K562 (cell line): ENCODE measurements at regions of chr3 and their contacts with region 1.

Region 1: GRCh38 chr3:25594007-25594502 is 70.7 kb downstream of the TOP2B start:
- DNase-seq: peak; percentile 35 to 68 (median 63)
- ATAC-seq: peak; percentile 69
- H3K4me3 ChIP-seq: no peak overlapping the region
- H3K27ac ChIP-seq: no peak overlapping the region
- H3K4me1 ChIP-seq: peaks cover 0 to 18% of the 10 kb centered on the region in 2 experiments; a peak in 2 of 5 replicates
- H3K27me3 ChIP-seq: no peaks in the 10 kb centered on the region
- CTCF ChIP-seq: peak; percentile 59 to 79 (median 67); a peak in 5 of 6 replicates
- EP300 ChIP-seq: no peak
- POLR2A ChIP-seq: no peak
- RAD21 ChIP-seq: peak; percentile 61 to 66

Region 2: DNA sequence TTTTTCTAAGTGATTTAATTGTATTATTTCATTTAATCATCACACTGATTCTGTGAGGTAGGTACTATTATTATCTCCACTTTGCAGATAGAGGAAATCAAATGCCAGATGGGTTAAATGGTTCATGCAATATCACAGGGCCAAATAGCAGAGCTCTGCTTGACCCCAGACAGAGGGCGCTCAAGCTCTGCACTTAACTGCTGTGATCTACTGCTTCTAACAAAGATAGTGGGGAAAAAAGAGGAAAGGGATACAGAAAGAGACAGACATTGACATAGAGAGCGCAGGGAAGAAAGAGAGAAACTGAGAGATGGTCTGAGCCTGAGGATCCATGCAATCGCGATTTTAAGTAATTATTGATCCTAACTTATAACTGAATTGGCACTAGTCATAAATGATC is 820.3 kb before region 1 on chr3:
- CTCF ChIA-PET with region 1: interaction called, 4 read pairs
- POLR2A ChIA-PET with region 1: no interaction called
- in situ Hi-C with region 1: no loop called
- intact Hi-C with region 1: loop called (anchors 1 kb)
- DNase-seq: peak in 3 of 4 experiments; percentile 13 to 56 (median 17)
- ATAC-seq: peak; percentile 88
- H3K4me3 ChIP-seq: no peak overlapping the region
- H3K27ac ChIP-seq: no peak overlapping the region
- H3K4me1 ChIP-seq: no peaks in the 10 kb centered on the region
- H3K27me3 ChIP-seq: no peaks in the 10 kb centered on the region
- CTCF ChIP-seq: peak; percentile 40 to 65 (median 62)
- EP300 ChIP-seq: no peak
- POLR2A ChIP-seq: no peak
- RAD21 ChIP-seq: peak; percentile 55 to 72

Region 3: DNA sequence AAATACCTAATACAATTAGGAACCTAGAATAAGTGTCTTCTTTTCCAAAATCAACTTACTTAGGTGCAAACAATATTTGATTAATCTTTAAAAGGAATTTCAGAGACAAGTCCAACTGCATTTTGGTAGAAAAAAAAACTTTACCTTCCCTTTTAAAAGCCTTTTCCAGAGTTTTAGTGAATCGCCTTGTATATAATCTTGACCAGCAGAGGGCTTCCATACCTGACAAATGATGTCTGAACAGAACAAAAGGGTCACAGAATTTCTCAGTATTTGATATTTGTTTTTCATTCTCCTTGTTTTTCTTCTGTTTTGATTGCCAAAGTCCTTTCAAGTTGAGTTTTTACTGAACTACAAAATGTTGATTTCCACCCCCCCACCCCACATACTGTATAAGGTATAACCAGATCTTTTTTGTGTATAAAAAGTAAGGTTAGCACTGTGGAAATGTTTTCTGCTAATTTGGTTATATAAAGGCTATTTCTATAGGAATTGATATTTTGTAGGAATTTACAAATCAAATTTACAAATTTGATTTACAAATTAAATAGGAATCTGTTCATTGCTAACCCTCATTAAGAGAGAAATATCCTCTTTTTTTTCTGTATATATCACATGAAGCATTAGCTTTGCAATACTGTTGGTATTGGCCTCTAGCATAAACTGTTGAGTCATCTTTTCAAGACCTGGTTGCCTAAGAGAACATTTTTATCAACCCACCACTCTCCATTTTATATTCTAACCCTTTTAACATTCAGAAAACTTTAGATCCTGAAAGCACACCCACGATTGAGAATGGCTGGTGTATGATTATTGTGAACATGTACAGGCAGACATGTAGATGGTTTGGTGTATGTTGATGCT is 630.1 kb before region 1 on chr3:
- CTCF ChIA-PET with region 1: interaction called, 3 read pairs
- POLR2A ChIA-PET with region 1: no interaction called
- in situ Hi-C with region 1: no loop called
- intact Hi-C with region 1: loop called (anchors 5 kb)
- DNase-seq: peak in 1 of 4 experiments; percentile 6
- ATAC-seq: no peak
- H3K4me3 ChIP-seq: no peak overlapping the region
- H3K27ac ChIP-seq: no peak overlapping the region
- H3K4me1 ChIP-seq: no peaks in the 10 kb centered on the region
- H3K27me3 ChIP-seq: no peaks in the 10 kb centered on the region
- CTCF ChIP-seq: no peak; a peak in 1 of 6 replicates
- EP300 ChIP-seq: no peak
- POLR2A ChIP-seq: no peak
- RAD21 ChIP-seq: peak in 1 of 2 experiments; percentile 40; a peak in 1 of 4 replicates

Region 4: DNA sequence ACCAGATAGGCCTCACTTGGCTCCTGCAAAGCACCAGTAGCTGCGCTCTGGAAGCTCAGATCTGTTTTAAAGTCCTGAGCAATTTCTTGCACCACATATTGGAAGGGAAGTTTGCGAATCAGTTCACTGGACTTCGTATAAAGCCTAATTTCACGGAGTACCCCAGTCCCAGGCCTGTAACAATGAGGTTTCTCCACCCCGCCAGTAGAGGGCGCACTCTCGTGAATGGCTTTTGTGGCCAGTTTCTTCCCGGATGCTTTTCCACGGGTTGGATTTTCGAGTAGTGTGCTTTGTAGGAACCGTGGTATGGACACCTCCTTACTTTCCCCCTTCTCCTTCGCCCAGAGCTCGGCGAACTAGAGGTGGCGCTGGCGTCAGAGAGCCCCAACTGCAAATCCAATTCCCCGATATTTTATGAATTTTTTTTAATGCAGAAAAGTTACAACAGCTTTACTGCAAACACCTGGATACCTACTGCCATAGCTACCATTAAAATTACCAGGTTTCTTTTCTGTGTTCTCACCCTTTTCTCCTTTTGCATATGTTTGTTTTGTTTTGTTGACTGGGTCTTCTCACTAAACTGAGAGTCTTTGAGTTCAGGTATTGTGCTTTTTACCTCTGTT is 152.7 kb before region 1 on chr3:
- CTCF ChIA-PET with region 1: no interaction called
- POLR2A ChIA-PET with region 1: no interaction called
- in situ Hi-C with region 1: no loop called
- intact Hi-C with region 1: loop called (anchors 2 kb)
- DNase-seq: peak; percentile 57 to 78 (median 72)
- ATAC-seq: peak; percentile 90
- H3K4me3 ChIP-seq: no peak overlapping the region
- H3K27ac ChIP-seq: no peak overlapping the region
- H3K4me1 ChIP-seq: no peaks in the 10 kb centered on the region
- H3K27me3 ChIP-seq: peaks cover 2 to 7% of the 10 kb centered on the region in 2 experiments; a peak in 1 of 5 replicates
- CTCF ChIP-seq: peak; percentile 76 to 94 (median 79)
- EP300 ChIP-seq: no peak
- POLR2A ChIP-seq: no peak
- RAD21 ChIP-seq: peak in 1 of 2 experiments; percentile 53; a peak in 3 of 4 replicates

Region 5: DNA sequence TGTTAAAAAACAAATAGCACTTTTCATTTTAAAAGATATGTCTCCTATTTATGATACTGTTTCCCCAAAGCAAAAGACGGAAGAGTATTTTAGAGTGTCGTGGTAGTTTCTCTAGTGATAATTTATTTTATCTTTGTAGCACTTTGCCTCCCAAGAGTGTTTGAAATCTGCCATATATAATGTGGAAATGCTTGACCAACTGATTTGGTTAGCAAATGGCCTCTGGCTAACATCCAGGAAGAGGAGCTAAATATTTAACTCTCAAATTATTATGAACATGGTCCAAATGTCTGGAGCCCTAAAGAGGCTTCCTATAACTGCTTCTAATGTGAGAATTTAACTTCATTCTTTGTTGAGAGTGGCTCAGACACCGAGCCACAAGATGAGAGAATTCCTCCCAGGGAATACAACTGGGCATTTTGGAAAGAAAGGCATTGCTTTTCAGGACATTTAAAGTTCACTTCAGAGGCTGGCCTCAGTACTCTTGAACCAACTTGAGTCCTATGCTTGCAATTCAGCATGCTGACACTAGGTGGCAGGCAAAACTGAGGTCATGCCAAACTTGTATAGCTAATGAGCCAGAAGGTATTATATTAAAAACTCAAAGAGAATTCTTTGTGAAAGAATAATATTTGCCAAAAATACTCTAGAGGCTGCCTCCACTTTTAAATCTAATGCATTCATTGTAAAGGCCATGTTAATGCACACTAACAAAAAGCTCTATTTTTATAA is 61.5 kb before region 1 on chr3:
- CTCF ChIA-PET with region 1: interaction called, 5 read pairs
- POLR2A ChIA-PET with region 1: no interaction called
- in situ Hi-C with region 1: no loop called
- intact Hi-C with region 1: loop called (anchors 1 kb)
- DNase-seq: peak; percentile 59 to 73 (median 67)
- ATAC-seq: peak; percentile 76
- H3K4me3 ChIP-seq: no peak overlapping the region
- H3K27ac ChIP-seq: no peak overlapping the region
- H3K4me1 ChIP-seq: no peaks in the 10 kb centered on the region
- H3K27me3 ChIP-seq: no peaks in the 10 kb centered on the region
- CTCF ChIP-seq: peak; percentile 57 to 79 (median 79)
- EP300 ChIP-seq: no peak
- POLR2A ChIP-seq: no peak
- RAD21 ChIP-seq: peak; percentile 40 to 76

Region 6: DNA sequence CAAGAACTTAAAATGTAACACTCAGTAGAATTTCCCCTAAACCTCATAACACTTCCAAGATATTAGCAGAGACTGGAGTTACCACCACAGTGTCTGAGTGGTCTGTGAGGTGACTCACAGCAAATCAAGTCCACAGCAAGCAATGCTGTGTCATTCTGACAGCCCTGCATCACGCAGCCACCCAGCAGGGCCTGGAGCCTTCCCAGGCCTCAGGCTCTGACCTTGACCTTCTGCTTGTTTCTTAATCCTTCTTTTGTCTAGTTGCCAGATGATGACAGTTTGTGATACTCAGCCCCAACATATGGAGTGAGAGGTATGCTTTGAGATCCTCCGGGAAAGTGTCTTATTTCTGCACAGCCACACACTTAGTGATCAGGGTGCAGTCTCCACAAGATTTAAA is 11.8 kb before region 1 on chr3:
- CTCF ChIA-PET with region 1: no interaction called
- POLR2A ChIA-PET with region 1: interaction called, 3 read pairs
- in situ Hi-C with region 1: no loop called
- intact Hi-C with region 1: loop called (anchors 1 kb)
- DNase-seq: peak; percentile 60 to 91 (median 71)
- ATAC-seq: peak; percentile 97
- H3K4me3 ChIP-seq: no peak overlapping the region
- H3K27ac ChIP-seq: no peak overlapping the region
- H3K4me1 ChIP-seq: peaks cover 2 to 6% of the 10 kb centered on the region in 2 experiments; a peak in 2 of 5 replicates
- H3K27me3 ChIP-seq: peaks cover 28 to 64% of the 10 kb centered on the region in 2 experiments
- CTCF ChIP-seq: no peak
- EP300 ChIP-seq: peak; percentile 76
- POLR2A ChIP-seq: no peak
- RAD21 ChIP-seq: no peak